Cardiac septum (tissue), 1 donor: ENCODE measurements at regions of chr12 and their contacts with region 1.

Region 1: GRCh38 chr12:57182921-57183790 is 33.4 kb upstream of the NXPH4 start:
- DNase-seq: no peak

Region 2: DNA sequence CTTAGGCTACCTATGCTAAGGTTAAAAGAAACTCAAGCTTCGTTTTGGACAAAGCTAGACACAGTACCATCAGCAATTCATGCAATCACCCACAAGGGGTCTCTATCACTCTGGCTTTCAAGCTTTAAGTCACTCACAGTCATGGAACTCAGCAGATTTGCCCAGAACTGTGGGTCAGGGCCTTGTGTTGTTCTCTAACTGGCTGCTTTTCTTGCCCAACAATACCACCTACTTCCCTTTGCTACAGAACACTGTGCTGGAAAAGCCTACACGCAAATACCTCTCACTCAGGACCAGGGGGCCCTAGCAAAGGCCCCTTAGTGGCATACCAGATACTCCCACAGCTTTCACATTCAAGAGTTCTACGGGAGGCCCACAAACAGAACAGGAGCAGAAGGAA is 113.6 kb before region 1 on chr12:
- intact Hi-C with region 1: loop called (anchors 5 kb)
- DNase-seq: no peak

Region 3: GRCh38 chr12:57416039-57416996 is 233.2 kb after region 1 on chr12:
- intact Hi-C with region 1: no loop called
- DNase-seq: no peak